ENCODE measurements at regions of chr17 and their contacts with region 1.

Region 1: DNA sequence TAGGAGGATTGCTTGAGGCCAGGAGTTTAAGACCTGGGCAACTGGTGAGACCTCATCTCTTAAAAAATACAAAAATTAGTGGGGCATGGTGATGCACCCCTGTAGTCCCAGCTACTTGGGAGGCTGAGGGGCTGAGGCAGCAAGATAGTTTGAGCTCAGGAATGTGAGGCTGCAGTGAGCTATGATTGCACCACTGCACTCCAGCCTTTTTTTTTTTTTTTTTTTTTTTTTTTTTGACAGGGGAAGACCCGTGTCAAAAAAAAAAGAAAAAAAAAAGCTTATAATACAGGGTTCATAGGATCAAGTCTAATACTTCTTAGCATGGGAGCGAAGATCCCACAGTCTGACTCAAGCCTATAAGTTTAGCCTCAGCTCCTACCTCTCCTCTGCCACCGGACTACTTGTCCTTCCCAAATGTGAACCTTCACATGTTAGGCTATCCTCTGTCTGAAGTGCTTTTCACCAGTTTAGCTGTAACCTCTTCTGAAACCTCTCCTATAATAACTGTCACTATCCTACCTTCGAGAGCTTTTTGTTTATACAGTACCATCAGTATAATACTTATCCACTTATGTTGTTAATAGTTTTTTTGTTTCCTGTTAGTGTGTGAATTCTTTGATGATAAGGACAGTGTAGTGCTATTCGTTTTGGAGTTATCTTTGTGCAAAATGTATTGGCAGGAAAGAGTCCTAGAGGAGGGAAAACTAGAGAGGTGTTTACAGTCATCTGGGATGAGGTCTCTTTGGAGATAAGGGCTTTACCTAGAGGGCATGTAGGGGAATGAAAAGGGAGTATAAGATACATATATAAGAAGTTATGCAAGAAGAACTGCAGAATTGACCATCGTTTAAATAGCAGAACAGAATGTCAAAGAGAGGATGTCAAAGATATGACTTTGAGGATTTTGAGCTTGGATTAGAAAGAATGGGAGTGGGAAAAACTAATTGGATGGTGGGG is 15.5 kb downstream of the CPD start:
- DNase-seq: no peak
- ATAC-seq: no peak
- H3K4me3 ChIP-seq: no peak overlapping the region
- H3K27ac ChIP-seq: no peak overlapping the region
- H3K4me1 ChIP-seq: no peaks in the 10 kb centered on the region; the same call in 1 of the 2 replicates
- H3K27me3 ChIP-seq: no peaks in the 10 kb centered on the region
- CTCF ChIP-seq: no peak

Region 2: DNA sequence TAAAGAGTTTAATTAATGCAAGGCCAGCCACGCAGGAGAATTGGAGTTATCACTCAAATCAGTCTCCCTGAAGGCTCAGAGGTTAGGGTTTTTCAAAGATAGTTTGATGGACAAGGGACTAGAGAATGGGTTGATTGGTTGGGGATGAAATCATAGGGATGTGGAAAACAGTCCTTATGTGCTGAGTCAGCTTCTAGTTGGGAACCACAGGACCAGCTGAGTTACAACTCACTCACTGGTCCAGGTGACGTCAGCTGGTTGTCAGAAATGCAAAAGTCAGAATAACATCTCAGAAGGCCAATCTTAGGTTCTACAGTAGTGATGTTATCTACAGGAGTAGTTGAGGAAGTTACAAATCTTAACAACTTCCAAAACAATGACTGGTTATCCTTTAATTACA is 32.1 kb after region 1 on chr17:
- CTCF ChIA-PET with region 1: no interaction called
- POLR2A ChIA-PET with region 1: interaction called, 16 read pairs
- in situ Hi-C with region 1: no loop called
- intact Hi-C with region 1: no loop called
- DNase-seq: no peak
- ATAC-seq: no peak
- H3K4me3 ChIP-seq: no peak overlapping the region
- H3K27ac ChIP-seq: no peak overlapping the region
- H3K4me1 ChIP-seq: no peaks in the 10 kb centered on the region
- H3K27me3 ChIP-seq: no peaks in the 10 kb centered on the region
- CTCF ChIP-seq: no peak